Endothelial cell of umbilical vein (primary cell): ENCODE measurements at regions of chr1 and their contacts with region 1.

Region 1: DNA sequence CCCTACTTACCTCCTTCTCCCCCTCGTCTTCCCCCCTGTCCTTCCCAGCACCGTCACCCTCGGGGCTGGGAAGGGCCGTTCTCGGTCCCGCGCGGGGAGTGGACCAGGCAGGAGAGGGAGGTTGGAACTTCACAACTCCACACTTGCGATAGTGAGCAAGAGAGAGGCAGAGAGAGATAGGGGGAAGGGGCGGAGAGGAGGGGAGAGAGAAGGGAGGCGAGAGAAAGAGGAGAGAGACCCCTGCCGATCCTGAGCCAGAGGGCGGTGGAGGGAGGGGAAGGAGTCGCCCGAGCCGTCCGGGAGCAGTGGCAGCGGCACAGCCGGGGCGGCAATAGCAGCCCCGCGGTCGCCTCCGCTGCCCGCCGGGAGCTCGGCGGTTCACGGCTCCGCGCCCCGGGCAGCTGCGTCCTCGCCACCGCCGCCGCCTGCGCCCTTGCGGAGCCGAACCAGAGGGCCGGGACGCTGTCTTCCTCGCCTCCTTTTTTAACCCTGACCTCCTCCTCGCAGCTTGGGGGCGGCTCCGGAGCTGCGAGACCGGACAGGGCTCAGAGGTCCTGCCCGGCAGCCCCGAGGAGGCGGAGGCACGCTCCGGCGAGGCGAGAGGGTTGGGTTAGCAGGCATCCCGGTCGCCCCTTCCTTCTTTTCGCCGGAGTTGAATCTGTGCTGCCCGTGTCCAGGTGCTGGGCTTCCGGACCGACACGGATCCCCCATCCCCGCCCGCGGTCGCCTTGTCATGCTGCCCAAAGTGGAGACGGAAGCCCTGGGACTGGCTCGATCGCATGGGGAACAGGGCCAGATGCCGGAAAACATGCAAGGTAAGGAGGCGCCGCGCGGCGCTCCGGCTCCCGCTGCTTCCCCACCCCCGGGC is 11.7 kb downstream of the NR5A2 start:
- DNase-seq: peak; percentile 65
- H3K4me3 ChIP-seq: peak overlapping the region; percentile 11 to 75 (median 59)
- H3K27ac ChIP-seq: no peak overlapping the region
- H3K4me1 ChIP-seq: peaks cover 22% of the 10 kb centered on the region
- H3K27me3 ChIP-seq: peaks cover 15 to 97% of the 10 kb centered on the region in 2 experiments
- CTCF ChIP-seq: no peak
- POLR2A ChIP-seq: no peak

Region 2: GRCh38 chr1:199691540-199691939 is 347.7 kb before region 1 on chr1:
- CTCF ChIA-PET with region 1: interaction called, 17 read pairs
- POLR2A ChIA-PET with region 1: interaction called, 3 read pairs
- dilution Hi-C with region 1: no loop called
- intact Hi-C with region 1: loop called (anchors 1 kb)
- DNase-seq: peak; percentile 98
- H3K4me3 ChIP-seq: no peak overlapping the region
- H3K27ac ChIP-seq: peak overlapping the region; percentile 89
- H3K4me1 ChIP-seq: peaks cover 49% of the 10 kb centered on the region
- H3K27me3 ChIP-seq: no peaks in the 10 kb centered on the region
- CTCF ChIP-seq: peak in 1 of 2 donors; percentile 5
- POLR2A ChIP-seq: peak; percentile 81

Region 3: GRCh38 chr1:199780948-199781347 is 258.3 kb before region 1 on chr1:
- CTCF ChIA-PET with region 1: interaction called, 3 read pairs
- POLR2A ChIA-PET with region 1: no interaction called
- dilution Hi-C with region 1: no loop called
- intact Hi-C with region 1: loop called (anchors 5 kb)
- DNase-seq: peak; percentile 56
- H3K4me3 ChIP-seq: no peak overlapping the region
- H3K27ac ChIP-seq: peak overlapping the region; percentile 63
- H3K4me1 ChIP-seq: peaks cover 45% of the 10 kb centered on the region
- H3K27me3 ChIP-seq: no peaks in the 10 kb centered on the region
- CTCF ChIP-seq: no peak
- POLR2A ChIP-seq: no peak

Region 4: DNA sequence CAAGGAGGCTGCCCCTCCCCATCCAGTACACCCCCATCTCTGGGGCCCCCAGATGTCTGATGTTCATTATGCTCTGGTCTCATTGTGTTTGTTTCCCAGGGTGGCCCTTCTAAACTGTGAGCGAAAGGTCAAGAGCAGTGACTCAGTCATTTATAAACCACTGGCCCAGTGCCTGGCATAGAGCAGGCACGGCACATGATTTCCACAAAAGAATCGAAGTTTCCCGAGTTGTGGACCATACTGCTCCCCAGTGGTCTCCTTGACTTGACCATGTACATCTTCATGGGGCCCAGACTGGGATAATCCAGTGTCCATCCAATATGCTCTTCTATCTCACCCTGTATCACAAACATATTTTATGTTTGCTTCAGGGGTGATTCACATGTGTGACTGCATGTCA is 141.6 kb after region 1 on chr1:
- CTCF ChIA-PET with region 1: interaction called, 3 read pairs
- POLR2A ChIA-PET with region 1: no interaction called
- dilution Hi-C with region 1: no loop called
- intact Hi-C with region 1: loop called (anchors 1 kb)
- DNase-seq: peak; percentile 78
- H3K4me3 ChIP-seq: no peak overlapping the region
- H3K27ac ChIP-seq: no peak overlapping the region
- H3K4me1 ChIP-seq: peaks cover 31% of the 10 kb centered on the region
- H3K27me3 ChIP-seq: no peaks in the 10 kb centered on the region
- CTCF ChIP-seq: no peak
- POLR2A ChIP-seq: no peak

Region 5: GRCh38 chr1:200279810-200280411 is 240.7 kb after region 1 on chr1:
- CTCF ChIA-PET with region 1: interaction called, 8 read pairs
- POLR2A ChIA-PET with region 1: no interaction called
- dilution Hi-C with region 1: no loop called
- intact Hi-C with region 1: loop called (anchors 5 kb)
- DNase-seq: peak; percentile 74
- H3K4me3 ChIP-seq: no peak overlapping the region
- H3K27ac ChIP-seq: no peak overlapping the region
- H3K4me1 ChIP-seq: no peaks in the 10 kb centered on the region
- H3K27me3 ChIP-seq: peaks cover 3 to 5% of the 10 kb centered on the region in 2 experiments
- CTCF ChIP-seq: peak; percentile 66 to 69
- POLR2A ChIP-seq: no peak